HepG2 (cell line): ENCODE measurements at regions of chr10 and their contacts with region 1.

Region 1: GRCh38 chr10:52883996-52884871 is 111.7 kb upstream of the MBL2 start:
- DNase-seq: peak; percentile 92
- ATAC-seq: peak; percentile 98
- H3K4me3 ChIP-seq: no peak overlapping the region; a peak in 1 of 6 replicates
- H3K27ac ChIP-seq: no peak overlapping the region
- H3K4me1 ChIP-seq: peaks cover 10% of the 10 kb centered on the region
- H3K27me3 ChIP-seq: no peaks in the 10 kb centered on the region; a peak in 1 of 5 replicates
- CTCF ChIP-seq: peak; percentile 87
- EP300 ChIP-seq: peak; percentile 43 to 58; a peak in 3 of 4 replicates
- POLR2A ChIP-seq: no peak
- RAD21 ChIP-seq: peak; percentile 75

Region 2: GRCh38 chr10:52818019-52818418 is 66.2 kb before region 1 on chr10:
- CTCF ChIA-PET with region 1: no interaction called
- POLR2A ChIA-PET with region 1: no interaction called
- in situ Hi-C with region 1: no loop called
- intact Hi-C with region 1: loop called (anchors 2 kb)
- DNase-seq: peak; percentile 51
- ATAC-seq: peak; percentile 85
- H3K4me3 ChIP-seq: no peak overlapping the region
- H3K27ac ChIP-seq: no peak overlapping the region
- H3K4me1 ChIP-seq: no peaks in the 10 kb centered on the region
- H3K27me3 ChIP-seq: no peaks in the 10 kb centered on the region
- CTCF ChIP-seq: peak; percentile 70
- EP300 ChIP-seq: no peak
- POLR2A ChIP-seq: no peak
- RAD21 ChIP-seq: no peak

Region 3: GRCh38 chr10:53209944-53210611 is 325.8 kb after region 1 on chr10:
- CTCF ChIA-PET with region 1: no interaction called
- POLR2A ChIA-PET with region 1: no interaction called
- in situ Hi-C with region 1: no loop called
- intact Hi-C with region 1: loop called (anchors 10 kb)
- DNase-seq: peak; percentile 14
- ATAC-seq: peak; percentile 71
- H3K4me3 ChIP-seq: no peak overlapping the region
- H3K27ac ChIP-seq: no peak overlapping the region
- H3K4me1 ChIP-seq: no peaks in the 10 kb centered on the region
- H3K27me3 ChIP-seq: no peaks in the 10 kb centered on the region
- CTCF ChIP-seq: peak; percentile 37
- EP300 ChIP-seq: no peak
- POLR2A ChIP-seq: no peak
- RAD21 ChIP-seq: no peak

Region 4: DNA sequence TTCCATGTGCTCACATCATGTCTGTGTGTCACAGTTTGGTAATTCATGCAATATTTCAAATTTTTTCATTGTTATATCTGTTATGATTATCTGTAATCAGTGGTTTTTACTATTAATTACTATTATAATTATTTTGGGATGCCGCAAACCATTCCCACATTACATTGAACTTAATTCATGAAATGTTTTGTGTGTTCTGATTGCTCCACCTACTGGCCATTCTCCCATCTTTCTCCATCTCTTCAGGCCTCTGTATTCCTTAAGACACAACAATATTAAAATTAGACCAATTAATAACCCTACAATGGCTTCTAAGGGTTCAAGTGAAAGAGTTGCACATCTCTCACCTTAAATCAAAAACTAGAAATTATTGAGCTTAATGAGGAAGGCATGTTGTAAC is 1518.3 kb after region 1 on chr10:
- CTCF ChIA-PET with region 1: interaction called, 9 read pairs
- POLR2A ChIA-PET with region 1: no interaction called
- in situ Hi-C with region 1: no loop called
- intact Hi-C with region 1: loop called (anchors 1 kb)
- DNase-seq: peak; percentile 11
- ATAC-seq: no peak
- H3K4me3 ChIP-seq: no peak overlapping the region
- H3K27ac ChIP-seq: no peak overlapping the region
- H3K4me1 ChIP-seq: no peaks in the 10 kb centered on the region
- H3K27me3 ChIP-seq: no peaks in the 10 kb centered on the region; a peak in 1 of 5 replicates
- CTCF ChIP-seq: peak; percentile 41
- EP300 ChIP-seq: no peak
- POLR2A ChIP-seq: no peak
- RAD21 ChIP-seq: no peak